Mammary epithelial cell (primary cell): ENCODE measurements at regions of chrX and their contacts with region 1.

Region 1: DNA sequence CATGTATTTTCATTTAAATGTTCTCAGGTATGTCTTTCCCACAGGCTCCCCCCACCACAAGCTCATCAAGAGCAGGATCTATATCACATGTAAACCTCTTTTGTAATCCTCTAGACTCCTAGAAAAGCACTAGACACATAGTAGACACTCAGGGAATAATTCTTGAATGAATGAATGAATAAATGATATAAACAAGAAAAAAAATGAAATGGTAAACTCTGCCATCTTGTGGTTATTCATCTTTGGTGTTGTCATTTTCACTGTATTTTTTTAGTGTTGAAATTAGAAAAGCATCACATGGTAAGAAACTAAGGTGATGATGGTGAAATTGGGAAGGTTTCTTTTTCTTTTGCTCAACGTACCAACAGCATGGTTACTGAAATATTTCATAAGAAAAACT is 34.2 kb upstream of the C1GALT1C1 start:
- DNase-seq: peak; percentile 13
- H3K4me3 ChIP-seq: no peak overlapping the region
- H3K27ac ChIP-seq: no peak overlapping the region
- H3K4me1 ChIP-seq: peaks cover 6% of the 10 kb centered on the region
- H3K27me3 ChIP-seq: no peaks in the 10 kb centered on the region
- CTCF ChIP-seq: peak; percentile 11 to 26

Region 2: GRCh38 chrX:120499301-120500072 is 164.6 kb before region 1 on chrX:
- CTCF ChIA-PET with region 1: no interaction called
- dilution Hi-C with region 1: no loop called
- in situ Hi-C with region 1: no loop called
- intact Hi-C with region 1: loop called (anchors 1 kb)
- DNase-seq: no peak
- H3K4me3 ChIP-seq: no peak overlapping the region
- H3K27ac ChIP-seq: no peak overlapping the region
- H3K4me1 ChIP-seq: no peaks in the 10 kb centered on the region
- H3K27me3 ChIP-seq: no peaks in the 10 kb centered on the region
- CTCF ChIP-seq: no peak

Region 3: DNA sequence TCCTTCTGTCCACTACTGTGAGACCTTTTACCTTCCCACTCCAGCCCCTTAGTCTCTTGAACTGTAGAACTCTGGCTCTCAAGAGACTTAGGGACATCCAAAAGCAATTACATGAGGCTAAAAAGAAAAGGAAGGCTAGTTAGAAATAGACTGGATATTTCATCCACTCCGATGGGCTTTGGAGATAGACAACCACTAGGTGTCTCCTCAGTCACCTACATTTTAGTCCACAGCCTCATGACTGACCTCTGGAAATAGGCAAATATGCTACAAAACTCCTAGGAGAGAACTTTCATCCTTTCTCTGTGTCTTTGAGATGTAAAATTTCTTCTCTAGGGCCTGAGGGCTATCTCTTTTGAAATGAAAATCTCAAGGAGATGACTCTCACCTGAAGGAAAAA is 149.8 kb before region 1 on chrX:
- CTCF ChIA-PET with region 1: no interaction called
- dilution Hi-C with region 1: no loop called
- in situ Hi-C with region 1: loop called (anchors 10 kb)
- intact Hi-C with region 1: loop called (anchors 1 kb)
- DNase-seq: peak; percentile 19
- H3K4me3 ChIP-seq: no peak overlapping the region
- H3K27ac ChIP-seq: no peak overlapping the region
- H3K4me1 ChIP-seq: no peaks in the 10 kb centered on the region
- H3K27me3 ChIP-seq: no peaks in the 10 kb centered on the region
- CTCF ChIP-seq: peak; percentile 52 to 68

Region 4: DNA sequence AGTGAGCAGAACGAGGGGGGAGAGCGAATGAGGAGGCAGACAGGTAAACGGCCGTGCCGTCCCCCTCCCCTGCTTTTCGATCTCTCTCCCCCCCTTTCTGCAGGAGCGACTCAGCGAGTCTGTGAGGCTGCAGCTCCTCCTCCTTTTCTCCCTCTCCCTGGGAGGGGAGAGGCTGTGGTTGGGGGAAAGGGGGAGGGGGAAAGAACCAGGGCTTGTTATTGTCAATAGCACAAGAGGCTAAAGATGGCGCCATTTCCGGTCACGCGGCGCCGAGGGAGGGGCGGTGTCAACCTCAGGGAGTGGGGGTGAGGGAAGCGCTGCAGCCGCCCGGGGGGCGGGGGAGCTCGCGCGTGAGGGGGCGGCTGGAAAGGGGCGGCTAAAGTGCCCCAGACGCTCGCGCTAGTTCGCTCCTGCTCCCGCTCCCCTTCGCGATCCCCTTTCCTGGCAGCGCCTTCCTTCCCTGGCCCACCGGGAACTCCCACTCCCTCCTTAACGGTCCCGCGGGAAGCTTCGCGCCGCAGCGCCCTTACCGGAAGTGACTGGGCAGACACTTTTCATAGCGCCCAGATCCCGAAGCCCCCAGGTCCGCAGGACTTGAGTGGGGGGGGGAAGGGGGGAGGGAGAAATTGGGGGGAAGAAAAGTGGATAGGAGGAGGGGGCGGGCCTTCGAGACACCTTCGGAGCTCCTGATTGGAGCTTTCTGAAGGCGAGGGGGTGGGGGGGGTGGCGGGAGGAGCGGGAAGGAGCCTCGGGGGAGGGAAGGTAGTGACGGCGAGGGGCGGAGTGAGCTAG is 103.0 kb before region 1 on chrX and contains the start of gene CUL4B:
- CTCF ChIA-PET with region 1: interaction called, 12 read pairs
- dilution Hi-C with region 1: no loop called
- in situ Hi-C with region 1: no loop called
- intact Hi-C with region 1: no loop called
- DNase-seq: peak; percentile 89
- H3K4me3 ChIP-seq: peak within 1 kb of the TSS; percentile 59 to 85 (median 74)
- H3K27ac ChIP-seq: peak within 1 kb of the TSS; percentile 81
- H3K4me1 ChIP-seq: peaks cover 3% of the 10 kb centered on the region
- H3K27me3 ChIP-seq: no peaks in the 10 kb centered on the region
- CTCF ChIP-seq: no peak
- total RNA-seq, gene CUL4B: 25.9 to 51.2 TPM

Region 5: GRCh38 chrX:120769576-120770341 is 105.7 kb after region 1 on chrX:
- CTCF ChIA-PET with region 1: no interaction called
- dilution Hi-C with region 1: no loop called
- in situ Hi-C with region 1: no loop called
- intact Hi-C with region 1: loop called (anchors 5 kb)
- DNase-seq: peak; percentile 64
- H3K4me3 ChIP-seq: no peak overlapping the region
- H3K27ac ChIP-seq: no peak overlapping the region
- H3K4me1 ChIP-seq: peaks cover 8% of the 10 kb centered on the region
- H3K27me3 ChIP-seq: no peaks in the 10 kb centered on the region
- CTCF ChIP-seq: peak; percentile 17 to 46